Activated B cell treated with CpG ODN at 0.5 μM for 24 hours (primary cell): ENCODE measurements at regions of chr5 and their contacts with region 1.

Region 1: GRCh38 chr5:98773464-98774191 is at the start of gene RGMB:
- DNase-seq: peak; percentile 83
- ATAC-seq: peak; percentile 89
- H3K4me3 Mint-ChIP-seq: peak within 1 kb of the TSS; percentile 96
- H3K27ac Mint-ChIP-seq: peak within 1 kb of the TSS; percentile 96
- H3K4me1 Mint-ChIP-seq: peaks cover 55% of the 10 kb centered on the region
- H3K27me3 Mint-ChIP-seq: peaks cover 2% of the 10 kb centered on the region
- CTCF ChIP-seq: no peak
- total RNA-seq, gene RGMB: 12.7 and 13.8 TPM in 2 replicates

Region 2: DNA sequence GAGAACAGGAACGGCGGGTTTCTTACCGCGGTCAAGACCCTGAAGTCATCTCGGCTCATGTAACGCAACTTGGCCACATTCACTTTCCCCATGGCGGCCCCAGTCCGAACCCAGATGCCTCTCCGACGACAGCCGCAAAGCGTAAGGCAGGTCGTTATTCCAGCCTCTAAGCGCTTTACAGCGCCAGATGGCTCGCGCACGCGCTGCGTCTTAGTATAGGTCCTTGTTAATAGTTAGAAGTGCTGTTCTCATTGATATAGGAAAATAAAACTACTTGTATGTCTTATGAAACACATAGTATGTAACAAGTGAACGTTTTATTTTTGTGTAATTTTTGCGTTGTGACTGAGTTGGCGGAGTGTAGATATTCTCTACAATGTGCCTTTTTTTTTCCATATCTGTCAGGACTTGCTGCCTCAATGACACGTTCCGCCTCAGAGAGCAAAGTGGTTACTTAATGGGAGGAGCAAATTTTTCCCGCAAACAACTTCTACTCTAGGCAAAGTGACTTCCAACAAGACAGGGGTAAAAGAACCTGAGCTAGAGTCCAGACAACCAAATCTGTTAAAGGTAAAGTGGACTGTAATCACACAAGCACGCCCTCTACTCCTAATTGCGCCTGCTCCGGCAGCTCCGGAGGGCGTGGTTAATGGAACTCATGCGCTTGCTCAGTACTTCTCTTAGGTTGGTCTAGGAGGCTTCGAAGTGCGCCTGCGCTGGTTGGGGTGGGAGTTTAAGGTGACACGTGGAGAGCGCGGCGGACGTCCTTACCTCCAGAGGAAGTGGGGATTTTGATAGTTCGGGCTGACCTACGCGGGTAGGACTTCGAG is 1590.3 kb before region 1 on chr5 and contains the start of gene RIOK2:
- CTCF ChIA-PET with region 1: no interaction called
- POLR2A ChIA-PET with region 1: interaction called, 6 read pairs
- intact Hi-C with region 1: loop called (anchors 1 kb)
- DNase-seq: peak; percentile 78
- ATAC-seq: peak; percentile 89
- H3K4me3 Mint-ChIP-seq: peak within 1 kb of the TSS; percentile 96
- H3K27ac Mint-ChIP-seq: peak within 1 kb of the TSS; percentile 99
- H3K4me1 Mint-ChIP-seq: peaks cover 34% of the 10 kb centered on the region
- H3K27me3 Mint-ChIP-seq: no peaks in the 10 kb centered on the region
- CTCF ChIP-seq: no peak
- total RNA-seq, gene RIOK2: 38.3 and 41.4 TPM in 2 replicates

Region 3: DNA sequence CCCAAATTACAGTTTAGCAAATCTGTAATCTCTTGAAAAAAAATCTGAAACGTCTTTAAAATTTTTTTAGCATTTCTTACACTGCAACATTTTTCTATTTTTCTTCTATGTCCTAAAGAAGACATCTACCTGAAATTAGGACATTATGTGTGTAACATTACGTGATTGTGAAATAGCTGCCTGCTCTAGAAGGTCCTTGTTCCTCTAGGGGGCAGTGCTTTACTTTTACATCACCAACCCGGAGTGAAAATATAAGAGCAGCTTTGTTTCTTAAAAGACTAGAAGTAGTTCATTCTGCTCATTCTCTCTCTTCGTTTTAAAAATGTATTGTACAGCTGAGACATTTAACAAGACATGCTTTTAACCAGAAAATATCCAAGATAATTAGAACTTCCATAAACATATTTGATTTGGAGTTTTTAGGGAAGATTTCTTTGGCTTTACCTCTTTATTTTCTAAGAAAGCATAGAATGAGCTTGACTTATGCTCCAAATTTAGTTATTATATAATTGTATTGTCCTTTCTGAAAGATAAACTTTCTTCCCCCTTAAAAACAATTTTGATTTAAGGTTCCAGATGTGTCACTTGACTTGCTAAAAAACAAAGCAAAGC is 1542.5 kb before region 1 on chr5:
- CTCF ChIA-PET with region 1: interaction called, 8 read pairs
- POLR2A ChIA-PET with region 1: no interaction called
- intact Hi-C with region 1: loop called (anchors 1 kb)
- DNase-seq: no peak
- ATAC-seq: peak; percentile 52
- H3K4me3 Mint-ChIP-seq: no peak overlapping the region
- H3K27ac Mint-ChIP-seq: no peak overlapping the region
- H3K4me1 Mint-ChIP-seq: no peaks in the 10 kb centered on the region
- H3K27me3 Mint-ChIP-seq: peaks cover 1% of the 10 kb centered on the region
- CTCF ChIP-seq: peak; percentile 75

Region 4: GRCh38 chr5:97778451-97778850 is 995.2 kb before region 1 on chr5:
- CTCF ChIA-PET with region 1: no interaction called
- POLR2A ChIA-PET with region 1: no interaction called
- intact Hi-C with region 1: no loop called
- DNase-seq: no peak
- ATAC-seq: no peak
- H3K4me3 Mint-ChIP-seq: no peak overlapping the region
- H3K27ac Mint-ChIP-seq: no peak overlapping the region
- H3K4me1 Mint-ChIP-seq: no peaks in the 10 kb centered on the region
- H3K27me3 Mint-ChIP-seq: no peaks in the 10 kb centered on the region
- CTCF ChIP-seq: no peak

Region 5: GRCh38 chr5:98631311-98632054 is 142.1 kb before region 1 on chr5:
- CTCF ChIA-PET with region 1: no interaction called
- POLR2A ChIA-PET with region 1: no interaction called
- intact Hi-C with region 1: no loop called
- DNase-seq: no peak
- ATAC-seq: no peak
- H3K4me3 Mint-ChIP-seq: no peak overlapping the region
- H3K27ac Mint-ChIP-seq: no peak overlapping the region
- H3K4me1 Mint-ChIP-seq: no peaks in the 10 kb centered on the region
- H3K27me3 Mint-ChIP-seq: no peaks in the 10 kb centered on the region
- CTCF ChIP-seq: no peak

Region 6: GRCh38 chr5:98734646-98735045 is 39.0 kb before region 1 on chr5:
- CTCF ChIA-PET with region 1: no interaction called
- POLR2A ChIA-PET with region 1: no interaction called
- intact Hi-C with region 1: no loop called
- DNase-seq: no peak
- ATAC-seq: no peak
- H3K4me3 Mint-ChIP-seq: no peak overlapping the region
- H3K27ac Mint-ChIP-seq: no peak overlapping the region
- H3K4me1 Mint-ChIP-seq: no peaks in the 10 kb centered on the region
- H3K27me3 Mint-ChIP-seq: peaks cover 26% of the 10 kb centered on the region
- CTCF ChIP-seq: no peak

Region 7: GRCh38 chr5:98796197-98796972 is 22.8 kb after region 1 on chr5:
- CTCF ChIA-PET with region 1: interaction called, 35 read pairs
- POLR2A ChIA-PET with region 1: no interaction called
- intact Hi-C with region 1: loop called (anchors 1 kb)
- DNase-seq: no peak
- ATAC-seq: peak; percentile 75
- H3K4me3 Mint-ChIP-seq: no peak overlapping the region
- H3K27ac Mint-ChIP-seq: no peak overlapping the region
- H3K4me1 Mint-ChIP-seq: peaks cover 8% of the 10 kb centered on the region
- H3K27me3 Mint-ChIP-seq: no peaks in the 10 kb centered on the region
- CTCF ChIP-seq: peak; percentile 26

Region 8: GRCh38 chr5:98827161-98827560 is 53.5 kb after region 1 on chr5:
- CTCF ChIA-PET with region 1: interaction called, 4 read pairs
- POLR2A ChIA-PET with region 1: no interaction called
- intact Hi-C with region 1: loop called (anchors 2 kb)
- DNase-seq: no peak
- ATAC-seq: no peak
- H3K4me3 Mint-ChIP-seq: no peak overlapping the region
- H3K27ac Mint-ChIP-seq: no peak overlapping the region
- H3K4me1 Mint-ChIP-seq: no peaks in the 10 kb centered on the region
- H3K27me3 Mint-ChIP-seq: no peaks in the 10 kb centered on the region
- CTCF ChIP-seq: no peak

Region 9: GRCh38 chr5:99032234-99033013 is 258.8 kb after region 1 on chr5:
- CTCF ChIA-PET with region 1: no interaction called
- POLR2A ChIA-PET with region 1: interaction called, 5 read pairs
- intact Hi-C with region 1: loop called (anchors 1 kb)
- DNase-seq: no peak
- ATAC-seq: peak; percentile 32
- H3K4me3 Mint-ChIP-seq: peak overlapping the region; percentile 81
- H3K27ac Mint-ChIP-seq: peak overlapping the region; percentile 84
- H3K4me1 Mint-ChIP-seq: peaks cover 85% of the 10 kb centered on the region
- H3K27me3 Mint-ChIP-seq: no peaks in the 10 kb centered on the region
- CTCF ChIP-seq: no peak

Region 10: DNA sequence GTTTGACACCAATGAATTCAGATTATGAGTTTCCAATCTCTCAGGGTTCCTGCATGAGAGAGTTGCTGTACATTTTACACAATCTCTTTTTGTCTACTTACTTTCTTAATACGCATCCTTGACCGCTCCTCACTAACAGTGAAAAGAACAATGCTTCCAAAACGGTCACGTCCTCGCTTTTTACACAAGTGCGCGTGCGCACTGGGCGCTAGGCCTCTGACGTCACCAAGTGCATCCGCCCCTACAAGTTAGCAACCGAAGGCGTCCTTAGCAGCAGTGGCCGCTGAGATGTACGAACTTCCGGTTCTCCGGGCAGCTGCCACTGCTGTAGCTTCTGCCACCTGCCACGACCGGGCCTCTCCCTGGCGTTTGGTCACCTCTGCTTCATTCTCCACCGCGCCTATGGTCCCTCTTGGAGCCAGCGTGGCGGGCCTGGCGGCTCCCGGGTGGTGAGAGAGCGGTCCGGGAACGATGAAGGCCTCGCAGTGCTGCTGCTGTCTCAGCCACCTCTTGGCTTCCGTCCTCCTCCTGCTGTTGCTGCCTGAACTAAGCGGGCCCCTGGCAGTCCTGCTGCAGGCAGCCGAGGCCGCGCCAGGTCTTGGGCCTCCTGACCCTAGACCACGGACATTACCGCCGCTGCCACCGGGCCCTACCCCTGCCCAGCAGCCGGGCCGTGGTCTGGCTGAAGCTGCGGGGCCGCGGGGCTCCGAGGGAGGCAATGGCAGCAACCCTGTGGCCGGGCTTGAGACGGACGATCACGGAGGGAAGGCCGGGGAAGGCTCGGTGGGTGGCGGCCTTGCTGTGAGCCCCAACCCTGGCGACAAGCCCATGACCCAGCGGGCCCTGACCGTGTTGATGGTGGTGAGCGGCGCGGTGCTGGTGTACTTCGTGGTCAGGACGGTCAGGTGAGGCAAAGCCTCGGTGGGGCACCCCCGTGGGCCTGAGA is 1761.7 kb after region 1 on chr5 and contains the start of gene FAM174A:
- CTCF ChIA-PET with region 1: no interaction called
- POLR2A ChIA-PET with region 1: no interaction called
- intact Hi-C with region 1: loop called (anchors 2 kb)
- DNase-seq: peak; percentile 87
- ATAC-seq: peak; percentile 91
- H3K4me3 Mint-ChIP-seq: peak within 1 kb of the TSS; percentile 99
- H3K27ac Mint-ChIP-seq: peak within 1 kb of the TSS; percentile 91
- H3K4me1 Mint-ChIP-seq: peaks cover 21% of the 10 kb centered on the region
- H3K27me3 Mint-ChIP-seq: peaks cover 2% of the 10 kb centered on the region
- CTCF ChIP-seq: no peak
- total RNA-seq, gene FAM174A: 4.1 and 5.2 TPM in 2 replicates

Region 11: DNA sequence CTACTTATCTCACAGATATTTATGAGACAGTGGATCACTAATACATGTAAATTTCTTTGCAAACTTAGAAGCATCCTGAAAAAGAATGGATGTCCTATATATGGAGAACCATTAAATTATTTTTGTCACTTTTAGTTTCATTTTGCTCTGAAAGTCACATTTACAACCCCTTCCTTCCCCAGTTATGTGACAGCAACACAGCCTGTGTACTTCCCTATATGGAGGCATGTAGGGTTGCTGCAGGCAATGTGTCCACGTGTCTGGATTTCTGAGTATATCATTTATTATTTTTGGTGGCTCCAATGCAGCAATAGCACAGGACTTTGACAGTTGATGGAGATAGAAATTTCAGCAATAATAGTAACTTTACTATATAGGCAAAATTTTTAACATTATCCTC is 1973.1 kb after region 1 on chr5:
- CTCF ChIA-PET with region 1: no interaction called
- POLR2A ChIA-PET with region 1: no interaction called
- intact Hi-C with region 1: no loop called
- DNase-seq: no peak
- ATAC-seq: peak; percentile 49
- H3K4me3 Mint-ChIP-seq: peak overlapping the region; percentile 35
- H3K27ac Mint-ChIP-seq: no peak overlapping the region
- H3K4me1 Mint-ChIP-seq: peaks cover 10% of the 10 kb centered on the region
- H3K27me3 Mint-ChIP-seq: peaks cover 7% of the 10 kb centered on the region
- CTCF ChIP-seq: no peak